ENCODE measurements at regions of chr17 and their contacts with region 1.

Region 1: DNA sequence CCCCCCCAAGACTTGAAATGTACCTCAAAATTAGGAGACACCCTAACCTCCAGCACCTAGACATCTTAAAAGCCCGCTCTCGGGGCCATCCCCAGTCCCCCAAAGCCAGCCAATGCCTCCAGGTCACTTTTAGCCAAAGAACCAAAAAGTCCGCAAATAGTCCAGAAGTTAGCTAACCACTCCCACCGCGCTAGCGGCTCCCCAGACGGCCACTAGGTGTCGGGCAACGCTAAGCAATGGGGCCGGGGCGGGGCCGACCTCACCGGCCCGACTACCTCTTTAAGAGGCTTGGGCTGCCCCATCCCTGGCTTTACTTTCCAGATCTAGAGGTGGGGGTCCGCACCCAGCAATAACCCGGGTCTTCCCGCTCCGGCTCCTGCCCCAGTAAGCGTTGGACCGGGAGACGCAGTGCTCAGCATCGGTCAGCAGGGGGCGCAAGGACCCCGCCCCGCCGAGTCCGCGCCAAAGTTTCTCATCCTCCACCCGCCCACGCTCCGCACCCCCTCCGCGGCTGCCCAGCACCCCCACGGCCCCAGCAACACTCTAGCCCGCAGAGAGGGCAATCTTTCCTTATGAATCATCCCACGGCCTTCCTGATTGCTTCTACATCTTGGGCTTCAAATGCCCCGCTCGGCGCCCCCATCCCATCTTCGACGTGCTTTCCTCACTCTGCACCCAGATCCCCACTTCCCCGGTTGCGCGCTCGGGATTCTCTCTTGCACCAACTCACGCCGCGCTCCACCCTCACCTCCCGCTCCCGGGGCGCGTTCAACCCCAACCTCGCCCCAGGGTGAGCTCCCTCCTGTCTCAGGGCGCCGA is 765 bp downstream of the COL1A1 start:
- DNase-seq: peak; percentile 74 to 96
- H3K4me3 ChIP-seq: peak overlapping the region; percentile 49 to 80
- H3K27ac ChIP-seq: peak overlapping the region; percentile 97 to 99
- H3K4me1 ChIP-seq: peaks cover 13 to 49% of the 10 kb centered on the region in 2 donors
- H3K27me3 ChIP-seq: no peaks in the 10 kb centered on the region
- CTCF ChIP-seq: peak; percentile 99 to 100 (median 99)

Region 2: GRCh38 chr17:50151937-50152547 is 48.6 kb before region 1 on chr17:
- intact Hi-C with region 1: loop called (anchors 5 kb)
- DNase-seq: peak; percentile 72 to 90
- H3K4me3 ChIP-seq: peak overlapping the region; percentile 73 to 76
- H3K27ac ChIP-seq: peak overlapping the region; percentile 91 to 93
- H3K4me1 ChIP-seq: peaks cover 31 to 54% of the 10 kb centered on the region in 2 donors
- H3K27me3 ChIP-seq: no peaks in the 10 kb centered on the region
- CTCF ChIP-seq: no peak

Region 3: GRCh38 chr17:50177983-50178834 is 22.5 kb before region 1 on chr17:
- intact Hi-C with region 1: loop called (anchors 1 kb)
- DNase-seq: peak; percentile 93 to 98
- H3K4me3 ChIP-seq: no peak overlapping the region
- H3K27ac ChIP-seq: peak overlapping the region; percentile 97 to 99
- H3K4me1 ChIP-seq: peaks cover 24 to 44% of the 10 kb centered on the region in 2 donors
- H3K27me3 ChIP-seq: no peaks in the 10 kb centered on the region
- CTCF ChIP-seq: peak; percentile 32 to 49 (median 34)

Region 4: GRCh38 chr17:50238601-50239280 is 38.1 kb after region 1 on chr17:
- intact Hi-C with region 1: loop called (anchors 5 kb)
- DNase-seq: no peak
- H3K4me3 ChIP-seq: no peak overlapping the region
- H3K27ac ChIP-seq: no peak overlapping the region
- H3K4me1 ChIP-seq: peaks cover 0 to 14% of the 10 kb centered on the region in 2 donors
- H3K27me3 ChIP-seq: no peaks in the 10 kb centered on the region
- CTCF ChIP-seq: no peak

Region 5: DNA sequence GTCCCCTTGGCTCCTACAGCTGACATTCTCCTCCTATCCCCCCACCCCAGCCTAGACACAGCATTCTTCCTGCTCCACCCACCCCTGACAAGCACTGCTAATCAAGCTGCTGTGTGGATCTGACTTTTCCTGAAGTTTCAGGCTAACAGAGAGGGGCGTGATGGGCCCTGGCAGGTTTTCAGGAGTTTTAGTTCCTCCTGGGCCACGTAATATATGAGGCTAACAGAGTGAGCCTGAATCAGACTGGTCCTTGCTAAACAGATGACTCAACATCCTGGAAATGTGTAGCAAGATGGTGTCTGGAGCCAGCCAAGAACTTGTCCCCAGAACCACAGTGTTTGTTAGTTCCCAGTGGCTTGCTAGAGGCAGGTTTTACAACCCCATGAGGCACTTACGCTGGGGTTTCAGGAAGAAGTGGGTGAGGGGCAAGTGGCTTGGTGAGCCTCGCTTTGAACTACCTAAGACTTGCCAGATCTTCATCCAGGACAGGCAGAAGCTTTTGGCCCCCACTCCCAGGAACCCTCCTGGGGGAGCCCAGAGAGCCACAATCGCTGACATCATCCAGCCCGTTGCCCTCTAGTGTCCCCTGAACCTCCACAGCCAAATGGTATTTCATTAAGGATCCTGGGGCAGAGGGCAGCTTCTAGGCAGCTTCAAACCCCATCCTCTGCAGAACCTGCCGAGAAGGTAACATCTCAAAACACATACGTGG is 89.5 kb after region 1 on chr17:
- intact Hi-C with region 1: loop called (anchors 1 kb)
- DNase-seq: peak; percentile 80 to 95
- H3K4me3 ChIP-seq: peak overlapping the region; percentile 49 to 56
- H3K27ac ChIP-seq: peak overlapping the region; percentile 91 to 95
- H3K4me1 ChIP-seq: peaks cover 12 to 35% of the 10 kb centered on the region in 2 donors
- H3K27me3 ChIP-seq: no peaks in the 10 kb centered on the region
- CTCF ChIP-seq: no peak